ENCODE measurements at regions of chr9 and their contacts with region 1.

Region 1: GRCh38 chr9:34899535-34900158 is 58.4 kb upstream of the PHF24 start:
- DNase-seq: peak; percentile 67
- H3K4me3 ChIP-seq: no peak overlapping the region
- H3K27ac ChIP-seq: no peak overlapping the region
- H3K4me1 ChIP-seq: no peaks in the 10 kb centered on the region
- H3K27me3 ChIP-seq: no peaks in the 10 kb centered on the region
- CTCF ChIP-seq: peak; percentile 46 to 83 (median 70)
- POLR2A ChIP-seq: no peak

Region 2: GRCh38 chr9:34536685-34537084 is 363.0 kb before region 1 on chr9:
- intact Hi-C with region 1: no loop called
- DNase-seq: no peak
- H3K4me3 ChIP-seq: no peak overlapping the region
- H3K27ac ChIP-seq: no peak overlapping the region
- H3K4me1 ChIP-seq: no peaks in the 10 kb centered on the region
- H3K27me3 ChIP-seq: no peaks in the 10 kb centered on the region
- CTCF ChIP-seq: no peak
- POLR2A ChIP-seq: no peak

Region 3: DNA sequence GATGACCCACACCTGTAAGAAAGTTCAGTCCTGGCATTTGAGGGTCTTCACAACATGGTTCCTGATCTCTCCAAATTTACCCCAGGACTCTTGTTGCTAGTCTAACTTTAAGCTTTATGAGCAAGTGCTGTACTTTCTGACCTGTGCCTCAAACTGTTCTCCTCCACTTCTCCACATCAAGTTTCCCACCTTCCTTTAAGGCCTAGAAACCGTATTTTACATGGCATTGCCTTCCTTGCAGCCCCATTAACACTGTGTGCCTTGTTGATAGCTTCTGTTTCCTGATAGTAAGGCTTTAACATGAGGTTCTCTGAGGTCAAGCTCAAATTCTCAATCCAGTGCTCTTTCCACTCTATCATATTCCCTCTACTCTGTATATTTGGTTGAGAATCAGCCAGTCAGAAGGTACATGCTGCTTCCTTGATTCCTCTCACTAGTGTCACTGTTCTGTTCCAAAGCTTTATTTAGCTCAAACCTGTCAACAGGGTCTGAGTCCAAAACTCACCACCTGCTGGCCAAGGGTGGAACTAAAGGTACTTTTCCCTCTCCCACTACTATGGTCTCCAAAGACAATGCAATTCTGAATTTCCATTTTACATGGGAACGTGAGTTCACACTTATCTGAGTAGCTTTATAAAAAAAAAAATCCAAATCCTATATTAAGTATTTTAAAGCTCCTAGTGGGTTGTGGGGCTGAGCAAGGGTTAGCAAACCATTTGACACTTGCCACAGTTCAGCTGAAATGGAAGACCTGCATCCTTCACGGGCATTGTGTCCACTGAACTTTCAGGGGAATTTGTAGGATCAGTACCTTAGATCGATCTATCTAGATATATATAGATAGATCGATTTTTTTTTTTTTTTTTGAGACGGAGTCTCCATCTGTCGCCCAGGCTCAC is 151.7 kb after region 1 on chr9:
- intact Hi-C with region 1: loop called (anchors 5 kb)
- DNase-seq: peak; percentile 23
- H3K4me3 ChIP-seq: no peak overlapping the region
- H3K27ac ChIP-seq: no peak overlapping the region
- H3K4me1 ChIP-seq: no peaks in the 10 kb centered on the region
- H3K27me3 ChIP-seq: no peaks in the 10 kb centered on the region
- CTCF ChIP-seq: peak in 3 of 4 experiments; percentile 55 to 64 (median 63)
- POLR2A ChIP-seq: no peak

Region 4: DNA sequence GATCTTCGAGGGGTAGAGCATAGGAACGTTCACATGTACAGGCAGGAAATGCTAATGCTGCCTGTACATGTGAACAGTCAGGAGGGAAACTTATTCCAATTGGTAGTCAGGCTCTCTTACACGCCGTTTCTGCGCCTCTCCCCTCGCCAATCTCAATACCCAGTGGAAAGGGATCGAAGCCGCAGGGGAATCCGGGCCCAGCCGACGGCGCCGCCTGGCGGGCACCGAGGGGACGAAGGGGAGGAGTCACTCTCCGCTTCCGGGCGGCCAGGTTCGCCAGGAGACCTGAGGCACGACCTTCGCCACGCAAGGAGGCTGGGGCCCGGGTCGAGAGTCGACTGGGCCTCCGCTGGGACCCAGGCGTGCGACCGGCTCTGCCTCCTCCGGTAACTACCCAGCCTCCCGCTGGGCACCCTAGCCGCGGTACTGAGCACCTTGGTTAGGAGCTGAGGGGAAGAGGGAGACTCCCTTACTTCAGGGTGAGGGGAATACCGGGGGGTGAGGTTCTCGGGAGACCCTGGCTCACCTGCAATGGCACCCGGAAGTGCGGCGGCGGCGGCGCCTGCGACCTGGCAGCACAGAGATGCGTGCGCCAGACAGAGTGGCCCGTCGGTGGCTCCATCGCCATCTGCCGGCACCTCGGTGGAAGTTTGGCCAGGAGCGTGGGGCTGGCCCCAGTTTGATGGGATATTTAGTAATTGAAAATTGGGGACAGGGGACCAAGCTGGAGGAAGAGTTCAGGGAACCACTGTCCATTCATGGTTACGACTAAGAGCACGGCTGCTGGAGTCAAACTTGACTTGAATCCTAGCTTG is 196.6 kb after region 1 on chr9 and contains the start of gene PIGO:
- intact Hi-C with region 1: loop called (anchors 5 kb)
- DNase-seq: peak; percentile 82
- H3K4me3 ChIP-seq: peak within 1 kb of the TSS; percentile 57 to 73
- H3K27ac ChIP-seq: peak within 1 kb of the TSS; percentile 90 to 94
- H3K4me1 ChIP-seq: peaks cover 4% of the 10 kb centered on the region
- H3K27me3 ChIP-seq: no peaks in the 10 kb centered on the region
- CTCF ChIP-seq: peak; percentile 69 to 77 (median 74)
- POLR2A ChIP-seq: peak; percentile 32
- total RNA-seq, gene PIGO: 29.9 to 30.7 TPM

Region 5: GRCh38 chr9:35111001-35111933 is 211.6 kb after region 1 on chr9:
- intact Hi-C with region 1: no loop called
- DNase-seq: peak; percentile 98
- H3K4me3 ChIP-seq: peak overlapping the region; percentile 70 to 73
- H3K27ac ChIP-seq: peak overlapping the region; percentile 72 to 77
- H3K4me1 ChIP-seq: peaks cover 11% of the 10 kb centered on the region
- H3K27me3 ChIP-seq: no peaks in the 10 kb centered on the region
- CTCF ChIP-seq: peak in 1 of 4 experiments; percentile 7
- POLR2A ChIP-seq: peak; percentile 80

Measured in prostate gland (tissue), 2 donors.